PC-9 (cell line): ENCODE measurements at regions of chr4 and their contacts with region 1.

Region 1: DNA sequence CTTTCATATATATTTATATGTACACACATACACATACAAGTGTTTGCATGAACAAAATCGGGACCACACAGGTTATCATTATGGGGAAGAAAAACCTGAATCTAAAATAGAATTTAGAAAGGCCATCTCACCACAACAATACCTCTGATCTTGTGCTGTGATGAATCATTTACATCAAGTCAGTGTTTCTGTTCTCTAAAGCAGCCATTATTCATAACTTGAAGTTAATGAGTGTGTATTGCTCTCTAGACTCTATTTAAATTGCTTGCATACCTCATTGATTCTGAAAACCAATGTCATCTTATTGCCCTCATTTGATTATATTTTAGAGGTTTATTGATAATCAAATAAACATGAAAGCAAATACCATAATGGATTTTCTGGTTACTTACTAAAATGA is 71.6 kb downstream of the FAM114A1 start:
- DNase-seq: no peak
- H3K4me3 ChIP-seq: no peak overlapping the region
- H3K27ac ChIP-seq: no peak overlapping the region
- H3K4me1 ChIP-seq: no peaks in the 10 kb centered on the region
- H3K27me3 ChIP-seq: no peaks in the 10 kb centered on the region
- CTCF ChIP-seq: no peak

Region 2: GRCh38 chr4:38993694-38994093 is 54.5 kb after region 1 on chr4:
- CTCF ChIA-PET with region 1: no interaction called
- POLR2A ChIA-PET with region 1: interaction called, 18 read pairs
- intact Hi-C with region 1: no loop called
- DNase-seq: no peak
- H3K4me3 ChIP-seq: no peak overlapping the region
- H3K27ac ChIP-seq: no peak overlapping the region
- H3K4me1 ChIP-seq: no peaks in the 10 kb centered on the region
- H3K27me3 ChIP-seq: no peaks in the 10 kb centered on the region
- CTCF ChIP-seq: peak; percentile 14; the same call in 1 of the 2 replicates